SK-N-SH (cell line): ENCODE measurements at regions of chr6 and their contacts with region 1.

Region 1: DNA sequence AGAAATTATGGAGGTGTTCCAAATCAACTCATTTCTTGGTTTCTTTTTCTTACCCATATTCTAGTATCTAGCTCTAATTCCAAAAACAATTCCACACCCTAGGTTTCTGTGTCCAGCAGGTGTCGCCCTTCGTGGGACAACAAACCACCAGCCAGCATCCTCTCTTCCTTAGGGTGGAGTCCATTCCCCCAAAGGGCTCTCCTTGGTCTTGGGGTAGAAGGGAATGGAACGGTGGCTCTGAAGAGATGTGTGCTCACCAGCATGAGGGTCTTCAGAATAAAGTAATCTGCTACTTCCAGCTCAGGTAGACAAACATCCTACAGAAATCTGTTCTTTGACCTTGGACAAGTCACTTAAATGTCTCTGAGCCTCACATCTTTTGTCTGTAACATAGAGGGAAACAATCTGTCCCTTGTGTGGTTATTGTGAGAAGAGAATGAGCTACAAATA is 7.2 kb downstream of the HLA-DMB start:
- DNase-seq: peak; percentile 66
- H3K4me3 ChIP-seq: peak overlapping the region in 1 of 2 experiments; percentile 27; a peak in 1 of 4 replicates
- H3K27ac ChIP-seq: no peak overlapping the region
- H3K4me1 ChIP-seq: no peaks in the 10 kb centered on the region
- H3K27me3 ChIP-seq: peaks cover 34% of the 10 kb centered on the region; the same call in 1 of the 2 replicates
- CTCF ChIP-seq: peak; percentile 86
- EP300 ChIP-seq: no peak
- RAD21 ChIP-seq: peak; percentile 76

Region 2: GRCh38 chr6:32885698-32886286 is 47.9 kb before region 1 on chr6:
- CTCF ChIA-PET with region 1: interaction called, 18 read pairs
- POLR2A ChIA-PET with region 1: no interaction called
- DNase-seq: peak; percentile 50
- H3K4me3 ChIP-seq: no peak overlapping the region; a peak in 1 of 4 replicates
- H3K27ac ChIP-seq: no peak overlapping the region
- H3K4me1 ChIP-seq: peaks cover 0 to 8% of the 10 kb centered on the region in 2 experiments; a peak in 1 of 4 replicates
- H3K27me3 ChIP-seq: peaks cover 14% of the 10 kb centered on the region; the same call in 1 of the 2 replicates
- CTCF ChIP-seq: peak; percentile 78
- EP300 ChIP-seq: no peak
- RAD21 ChIP-seq: peak; percentile 85

Region 3: DNA sequence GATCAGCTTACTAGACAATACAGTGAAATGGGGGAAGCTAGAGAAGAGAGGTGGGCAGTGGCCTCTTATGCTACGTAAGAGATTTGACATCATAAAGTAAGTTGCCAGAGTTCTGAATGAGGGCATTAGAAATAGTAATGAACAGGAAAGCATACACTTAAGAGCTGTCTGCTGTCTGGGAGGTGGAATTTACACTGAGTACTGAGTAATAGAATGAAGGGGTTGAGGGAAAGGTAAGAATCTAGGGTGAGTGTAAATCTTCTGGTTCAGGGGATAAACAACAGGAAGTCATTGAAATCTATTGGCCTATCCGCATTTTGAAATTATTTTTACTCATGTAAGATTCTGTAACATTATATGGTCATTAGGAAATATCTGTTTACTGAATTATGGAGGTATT is 28.6 kb before region 1 on chr6:
- CTCF ChIA-PET with region 1: interaction called, 18 read pairs
- POLR2A ChIA-PET with region 1: no interaction called
- DNase-seq: no peak
- H3K4me3 ChIP-seq: no peak overlapping the region
- H3K27ac ChIP-seq: no peak overlapping the region
- H3K4me1 ChIP-seq: no peaks in the 10 kb centered on the region
- H3K27me3 ChIP-seq: no peaks in the 10 kb centered on the region
- CTCF ChIP-seq: no peak
- EP300 ChIP-seq: no peak
- RAD21 ChIP-seq: no peak

Region 4: DNA sequence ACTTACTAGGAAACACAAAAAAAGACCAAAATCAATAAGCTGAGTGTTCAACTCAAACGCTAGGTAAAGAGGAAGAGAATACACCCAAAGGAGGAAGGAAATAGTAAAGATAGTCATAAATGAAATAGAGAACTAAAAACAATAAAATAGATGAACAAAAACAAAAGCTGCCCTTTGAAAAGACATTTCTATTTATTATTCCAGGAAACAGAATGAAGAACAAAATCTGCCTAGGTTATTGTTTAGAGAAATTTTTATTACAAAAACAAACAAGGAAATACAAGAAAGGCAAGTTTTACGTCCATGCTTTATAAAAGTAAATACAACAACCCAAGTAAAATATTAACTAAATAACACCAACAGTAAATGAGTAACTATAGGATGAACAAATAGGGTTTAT is 12.9 kb before region 1 on chr6:
- CTCF ChIA-PET with region 1: interaction called, 60 read pairs
- POLR2A ChIA-PET with region 1: no interaction called
- DNase-seq: no peak
- H3K4me3 ChIP-seq: no peak overlapping the region
- H3K27ac ChIP-seq: no peak overlapping the region
- H3K4me1 ChIP-seq: no peaks in the 10 kb centered on the region
- H3K27me3 ChIP-seq: peaks cover 26% of the 10 kb centered on the region; the same call in 1 of the 2 replicates
- CTCF ChIP-seq: no peak
- EP300 ChIP-seq: no peak
- RAD21 ChIP-seq: no peak

Region 5: DNA sequence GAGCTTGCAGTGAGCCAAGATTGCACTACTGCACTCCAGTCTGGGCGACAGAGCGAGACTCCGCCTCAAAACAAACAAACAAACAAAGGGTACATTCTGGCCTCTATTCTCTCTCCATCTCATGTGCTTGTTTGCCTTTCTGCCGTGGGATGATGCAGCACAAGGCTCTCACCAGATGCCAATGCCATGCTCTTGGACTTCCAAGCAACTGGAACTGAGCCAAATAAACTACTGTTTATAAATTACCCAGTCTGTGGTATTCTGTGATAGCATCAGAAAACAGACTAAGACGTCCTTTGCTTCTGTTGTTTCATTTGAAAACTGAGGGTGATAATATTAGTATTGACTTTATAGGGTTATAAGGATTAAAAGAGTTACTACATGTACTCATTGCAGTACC is 31.1 kb after region 1 on chr6:
- CTCF ChIA-PET with region 1: interaction called, 187 read pairs
- POLR2A ChIA-PET with region 1: no interaction called
- DNase-seq: no peak
- H3K4me3 ChIP-seq: no peak overlapping the region
- H3K27ac ChIP-seq: no peak overlapping the region
- H3K4me1 ChIP-seq: peaks cover 6% of the 10 kb centered on the region in 2 experiments; a peak in 3 of 4 replicates
- H3K27me3 ChIP-seq: no peaks in the 10 kb centered on the region
- CTCF ChIP-seq: no peak
- EP300 ChIP-seq: no peak
- RAD21 ChIP-seq: no peak